ENCODE measurements at regions of chr1 and their contacts with region 1.

Region 1: DNA sequence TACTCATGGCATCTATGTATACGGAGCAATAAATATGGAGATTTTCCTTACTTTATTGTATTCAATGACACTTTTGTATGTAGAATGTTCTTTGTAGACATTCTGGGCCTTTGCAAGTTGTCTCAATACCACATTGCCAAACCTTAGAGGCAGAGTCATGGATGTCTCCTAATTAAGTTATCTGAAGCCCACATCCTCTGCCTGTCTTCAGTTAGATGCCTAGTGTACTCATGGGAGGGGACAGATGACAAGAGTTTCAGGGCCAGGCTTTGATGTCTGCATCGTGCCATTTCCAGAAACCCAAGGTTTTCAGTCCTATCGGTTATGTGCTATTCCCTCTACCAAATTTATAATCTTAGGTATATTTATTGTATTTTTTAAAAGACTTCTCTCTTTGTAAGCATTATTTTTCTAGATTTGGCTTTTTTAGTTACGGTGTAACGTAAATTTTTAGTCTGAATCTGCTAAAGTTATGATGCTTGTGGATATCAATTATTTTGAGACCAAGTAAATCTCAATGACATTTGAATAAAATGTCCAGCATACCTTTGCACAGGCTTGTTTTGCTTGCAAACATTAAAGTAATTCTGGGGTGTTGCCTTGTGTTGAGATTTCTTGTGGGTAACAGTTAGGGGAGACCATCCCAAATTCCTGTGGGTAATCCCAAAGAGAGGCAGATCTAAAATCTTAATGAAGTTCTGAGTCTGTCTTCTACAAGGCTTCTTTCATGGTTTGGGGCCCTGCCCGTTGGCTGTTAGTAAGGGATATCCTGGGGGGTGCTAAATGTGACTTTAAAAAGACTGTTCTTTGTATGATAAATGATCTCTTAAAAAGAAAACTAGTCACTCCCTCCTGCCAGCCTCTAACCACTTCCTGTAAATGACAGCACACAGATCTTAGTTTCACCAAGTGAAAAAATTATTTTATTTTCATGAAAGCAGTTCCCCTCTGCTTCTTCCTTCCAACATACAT is 8.0 kb upstream of the MACF1 start:
- DNase-seq: no peak
- ATAC-seq: peak; percentile 8; the same call in 1 of the 2 replicates
- H3K4me3 ChIP-seq: no peak overlapping the region
- H3K27ac ChIP-seq: peak overlapping the region; percentile 6; the same call in 1 of the 2 replicates
- H3K4me1 ChIP-seq: peaks cover 57 to 67% of the 10 kb centered on the region in 2 experiments
- H3K27me3 ChIP-seq: no peaks in the 10 kb centered on the region
- CTCF ChIP-seq: no peak
- POLR2A ChIP-seq: no peak
- RAD21 ChIP-seq: no peak

Region 2: DNA sequence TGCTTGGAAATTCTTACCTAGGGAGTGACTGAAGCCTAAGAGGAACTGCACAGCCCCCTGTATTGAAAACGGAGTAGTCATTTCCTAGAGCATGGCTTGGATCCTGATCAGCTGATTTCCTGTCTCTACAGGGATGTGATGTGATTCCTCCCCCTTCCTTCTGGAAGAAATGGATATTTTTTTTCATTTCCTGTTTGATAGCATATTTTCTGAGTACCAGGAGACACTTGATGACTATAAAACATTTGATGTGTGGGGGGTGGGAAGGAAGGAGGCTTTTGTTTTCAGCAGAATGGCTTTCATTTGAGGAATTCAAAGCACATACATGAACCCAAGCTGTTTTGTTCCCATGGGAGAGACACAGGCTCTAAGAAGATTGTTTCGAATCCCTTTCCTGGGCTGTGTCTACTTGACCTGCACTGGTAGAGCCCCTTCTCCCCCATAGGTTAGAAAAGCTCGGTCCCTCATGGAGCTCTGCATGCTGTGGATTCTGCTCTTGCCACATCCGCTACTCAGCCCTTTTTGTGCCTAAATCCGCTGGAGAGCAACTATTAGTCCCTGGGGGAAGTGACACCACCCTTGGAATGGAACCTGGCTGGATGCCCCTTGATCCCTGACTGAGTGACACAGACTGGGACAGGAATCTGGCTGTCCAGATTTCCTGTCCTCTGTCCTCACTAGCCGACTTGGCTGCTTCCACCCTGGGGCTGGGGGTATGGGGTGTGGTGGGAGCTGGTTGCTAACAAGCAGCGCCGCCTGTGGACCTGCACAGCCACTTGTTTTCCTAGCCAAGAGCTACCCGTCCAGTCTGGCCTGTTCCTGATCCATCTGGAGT is 63.8 kb before region 1 on chr1:
- CTCF ChIA-PET with region 1: interaction called, 13 read pairs
- POLR2A ChIA-PET with region 1: interaction called, 5 read pairs
- RAD21 ChIA-PET with region 1: interaction called in 1 of 2 experiments, 3 read pairs
- intact Hi-C with region 1: no loop called
- DNase-seq: peak; percentile 44
- ATAC-seq: peak; percentile 78
- H3K4me3 ChIP-seq: no peak overlapping the region
- H3K27ac ChIP-seq: peak overlapping the region; percentile 25; the same call in 1 of the 2 replicates
- H3K4me1 ChIP-seq: peaks cover 45 to 48% of the 10 kb centered on the region in 2 experiments
- H3K27me3 ChIP-seq: no peaks in the 10 kb centered on the region
- CTCF ChIP-seq: peak in 2 of 3 experiments; percentile 26 to 38; a peak in 2 of 6 replicates
- POLR2A ChIP-seq: no peak
- RAD21 ChIP-seq: peak; percentile 53

Region 3: GRCh38 chr1:39183503-39184353 is 12.8 kb before region 1 on chr1:
- CTCF ChIA-PET with region 1: interaction called, 31 read pairs
- POLR2A ChIA-PET with region 1: interaction called, 13 read pairs
- RAD21 ChIA-PET with region 1: no interaction called
- intact Hi-C with region 1: no loop called
- DNase-seq: peak; percentile 96
- ATAC-seq: peak; percentile 91
- H3K4me3 ChIP-seq: peak overlapping the region in 1 of 2 experiments; percentile 18; a peak in 2 of 4 replicates
- H3K27ac ChIP-seq: peak overlapping the region; percentile 55
- H3K4me1 ChIP-seq: peaks cover 48 to 63% of the 10 kb centered on the region in 2 experiments
- H3K27me3 ChIP-seq: no peaks in the 10 kb centered on the region
- CTCF ChIP-seq: peak; percentile 42 to 66 (median 59); a peak in 5 of 6 replicates
- POLR2A ChIP-seq: no peak
- RAD21 ChIP-seq: peak; percentile 80

Region 4: GRCh38 chr1:39258146-39258924 is 61.8 kb after region 1 on chr1:
- CTCF ChIA-PET with region 1: interaction called, 51 read pairs
- POLR2A ChIA-PET with region 1: interaction called, 4 read pairs
- RAD21 ChIA-PET with region 1: interaction called, 7 to 11 read pairs
- intact Hi-C with region 1: loop called (anchors 1 kb)
- DNase-seq: peak; percentile 55
- ATAC-seq: peak; percentile 90
- H3K4me3 ChIP-seq: no peak overlapping the region
- H3K27ac ChIP-seq: no peak overlapping the region
- H3K4me1 ChIP-seq: peaks cover 0 to 3% of the 10 kb centered on the region in 2 experiments; a peak in 1 of 4 replicates
- H3K27me3 ChIP-seq: no peaks in the 10 kb centered on the region
- CTCF ChIP-seq: peak; percentile 84 to 92 (median 92)
- POLR2A ChIP-seq: no peak
- RAD21 ChIP-seq: peak; percentile 98

Region 5: DNA sequence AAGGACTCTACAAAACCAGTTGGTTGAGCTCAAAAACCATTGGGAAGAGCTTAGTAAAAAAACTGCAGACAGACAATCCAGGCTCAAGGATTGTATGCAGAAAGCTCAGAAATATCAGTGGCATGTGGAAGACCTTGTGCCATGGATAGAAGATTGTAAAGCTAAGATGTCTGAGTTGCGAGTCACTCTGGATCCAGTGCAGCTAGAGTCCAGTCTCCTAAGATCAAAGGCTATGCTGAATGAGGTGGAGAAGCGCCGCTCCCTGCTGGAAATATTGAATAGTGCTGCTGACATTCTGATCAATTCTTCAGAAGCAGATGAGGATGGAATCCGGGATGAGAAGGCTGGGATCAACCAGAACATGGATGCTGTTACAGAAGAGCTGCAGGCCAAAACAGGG is 190.9 kb after region 1 on chr1:
- CTCF ChIA-PET with region 1: interaction called, 12 read pairs
- POLR2A ChIA-PET with region 1: no interaction called
- RAD21 ChIA-PET with region 1: no interaction called
- intact Hi-C with region 1: no loop called
- DNase-seq: peak; percentile 83
- ATAC-seq: peak; percentile 81
- H3K4me3 ChIP-seq: peak overlapping the region in 1 of 2 experiments; percentile 10; a peak in 1 of 4 replicates
- H3K27ac ChIP-seq: peak overlapping the region; percentile 78
- H3K4me1 ChIP-seq: peaks cover 32 to 58% of the 10 kb centered on the region in 2 experiments
- H3K27me3 ChIP-seq: no peaks in the 10 kb centered on the region
- CTCF ChIP-seq: peak; percentile 53 to 70 (median 64); a peak in 5 of 6 replicates
- POLR2A ChIP-seq: no peak
- RAD21 ChIP-seq: peak; percentile 87

Region 6: DNA sequence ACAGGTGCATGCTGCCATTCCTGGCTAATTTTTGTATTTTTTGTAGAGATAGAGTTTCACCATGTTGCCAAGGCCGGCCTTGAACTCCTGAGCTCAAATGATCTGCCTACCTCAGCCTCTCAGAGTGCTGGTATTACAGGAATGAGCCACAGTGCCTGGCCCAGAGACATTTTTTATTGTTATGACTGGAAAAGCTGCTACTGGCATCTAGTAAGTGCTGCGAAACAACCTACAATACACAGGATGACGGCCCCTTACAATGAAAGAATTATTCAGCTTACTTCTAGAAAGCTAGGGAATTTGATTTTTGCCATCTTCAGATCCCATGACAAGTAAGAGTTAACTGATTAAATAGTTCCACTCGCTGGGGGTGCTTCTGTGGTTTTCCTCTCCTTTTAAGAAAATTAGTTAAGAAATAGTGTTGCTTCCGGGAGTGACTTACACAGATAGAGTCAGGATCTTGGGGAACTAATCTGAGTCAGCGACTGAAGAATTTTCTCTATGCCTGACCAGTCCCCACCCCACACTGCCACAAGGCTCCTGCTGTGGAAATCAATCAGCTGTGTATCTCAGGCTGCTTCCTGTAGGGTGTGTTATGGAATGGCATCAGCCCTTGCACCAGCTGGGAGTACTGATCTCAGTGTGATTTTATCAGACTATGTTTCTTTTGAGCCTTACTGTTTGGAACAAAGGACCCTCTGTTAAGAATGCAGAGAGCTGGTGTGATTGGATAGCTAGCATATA is 201.9 kb after region 1 on chr1:
- CTCF ChIA-PET with region 1: no interaction called
- POLR2A ChIA-PET with region 1: no interaction called
- RAD21 ChIA-PET with region 1: no interaction called
- intact Hi-C with region 1: loop called (anchors 1 kb)
- DNase-seq: peak; percentile 98
- ATAC-seq: peak; percentile 86
- H3K4me3 ChIP-seq: peak overlapping the region; percentile 15 to 50; a peak in 2 of 4 replicates
- H3K27ac ChIP-seq: peak overlapping the region; percentile 91
- H3K4me1 ChIP-seq: peaks cover 67 to 78% of the 10 kb centered on the region in 2 experiments
- H3K27me3 ChIP-seq: no peaks in the 10 kb centered on the region
- CTCF ChIP-seq: no peak
- POLR2A ChIP-seq: no peak
- RAD21 ChIP-seq: peak; percentile 30

Region 7: GRCh38 chr1:39538588-39539465 is 342.3 kb after region 1 on chr1:
- CTCF ChIA-PET with region 1: interaction called, 15 read pairs
- POLR2A ChIA-PET with region 1: no interaction called
- RAD21 ChIA-PET with region 1: interaction called, 3 read pairs
- intact Hi-C with region 1: no loop called
- DNase-seq: peak; percentile 49
- ATAC-seq: peak; percentile 99
- H3K4me3 ChIP-seq: no peak overlapping the region
- H3K27ac ChIP-seq: no peak overlapping the region
- H3K4me1 ChIP-seq: peaks cover 0 to 3% of the 10 kb centered on the region in 2 experiments; a peak in 2 of 4 replicates
- H3K27me3 ChIP-seq: no peaks in the 10 kb centered on the region
- CTCF ChIP-seq: peak; percentile 83 to 94 (median 91)
- POLR2A ChIP-seq: no peak
- RAD21 ChIP-seq: peak; percentile 98

Region 8: DNA sequence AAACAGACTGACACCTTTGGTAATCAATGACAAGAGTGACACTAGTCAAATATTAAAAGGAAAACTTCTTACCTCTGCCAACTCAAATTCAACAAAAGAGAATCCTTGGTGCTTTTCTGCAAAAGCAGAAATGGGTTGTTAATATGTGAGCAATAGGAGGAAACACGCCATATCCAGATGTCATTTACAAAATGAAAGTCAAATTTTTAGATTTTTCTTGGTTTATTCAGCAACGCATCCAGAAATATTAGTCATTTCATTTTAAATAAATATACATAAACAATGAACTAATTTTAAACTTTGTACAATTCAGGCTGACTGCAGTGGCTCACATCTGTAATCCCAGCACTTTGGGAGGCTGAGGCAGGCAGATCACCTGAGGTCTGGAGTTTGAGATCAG is 357.7 kb after region 1 on chr1:
- CTCF ChIA-PET with region 1: no interaction called
- POLR2A ChIA-PET with region 1: no interaction called
- RAD21 ChIA-PET with region 1: no interaction called
- intact Hi-C with region 1: no loop called
- DNase-seq: no peak
- ATAC-seq: no peak
- H3K4me3 ChIP-seq: no peak overlapping the region
- H3K27ac ChIP-seq: no peak overlapping the region
- H3K4me1 ChIP-seq: peaks cover 0 to 4% of the 10 kb centered on the region in 2 experiments; a peak in 1 of 4 replicates
- H3K27me3 ChIP-seq: no peaks in the 10 kb centered on the region
- CTCF ChIP-seq: no peak
- POLR2A ChIP-seq: no peak
- RAD21 ChIP-seq: no peak

Region 9: GRCh38 chr1:39776400-39776713 is 579.8 kb after region 1 on chr1:
- CTCF ChIA-PET with region 1: no interaction called
- POLR2A ChIA-PET with region 1: no interaction called
- RAD21 ChIA-PET with region 1: no interaction called
- intact Hi-C with region 1: no loop called
- DNase-seq: no peak
- ATAC-seq: no peak
- H3K4me3 ChIP-seq: no peak overlapping the region
- H3K27ac ChIP-seq: no peak overlapping the region
- H3K4me1 ChIP-seq: no peaks in the 10 kb centered on the region
- H3K27me3 ChIP-seq: no peaks in the 10 kb centered on the region
- CTCF ChIP-seq: no peak
- POLR2A ChIP-seq: no peak
- RAD21 ChIP-seq: no peak

Measured in HCT116 (cell line).